ENCODE measurements at regions of chr14 and their contacts with region 1.

Region 1: GRCh38 chr14:72443991-72444441 is 449.9 kb downstream of the DPF3 start:
- DNase-seq: peak; percentile 28
- ATAC-seq: peak; percentile 66
- H3K4me3 ChIP-seq: no peak overlapping the region
- H3K27ac ChIP-seq: peak overlapping the region; percentile 31; the same call in 1 of the 2 replicates
- H3K4me1 ChIP-seq: peaks cover 27% of the 10 kb centered on the region
- H3K27me3 ChIP-seq: no peaks in the 10 kb centered on the region
- CTCF ChIP-seq: no peak
- EP300 ChIP-seq: peak in 1 of 2 experiments; percentile 24; a peak in 1 of 4 replicates
- POLR2A ChIP-seq: no peak
- RAD21 ChIP-seq: no peak

Region 2: DNA sequence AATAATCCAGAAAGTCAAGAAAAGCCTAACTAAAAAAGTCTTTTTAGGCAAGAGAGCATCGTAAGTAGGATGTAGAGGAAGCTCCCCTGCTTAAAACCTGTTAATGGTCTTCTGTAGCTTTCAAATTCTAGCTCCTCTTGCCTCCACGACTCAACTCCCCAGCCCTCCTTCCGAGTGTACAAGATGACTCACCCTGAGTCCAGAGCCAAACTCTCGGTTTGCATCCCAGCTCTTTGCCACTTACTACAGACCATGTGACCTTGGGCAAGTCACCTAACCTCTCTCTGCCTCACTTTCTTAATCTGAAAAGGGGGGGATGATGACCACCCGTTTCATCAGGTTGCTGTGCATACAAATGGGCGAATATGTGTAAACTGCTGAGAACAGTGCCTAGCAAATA is 10.5 kb before region 1 on chr14:
- CTCF ChIA-PET with region 1: no interaction called
- POLR2A ChIA-PET with region 1: no interaction called
- RAD21 ChIA-PET with region 1: interaction called, 4 read pairs
- SMC1A ChIA-PET with region 1: interaction called, 12 read pairs
- in situ Hi-C with region 1: no loop called
- intact Hi-C with region 1: no loop called
- DNase-seq: no peak
- ATAC-seq: no peak
- H3K4me3 ChIP-seq: no peak overlapping the region
- H3K27ac ChIP-seq: no peak overlapping the region
- H3K4me1 ChIP-seq: no peaks in the 10 kb centered on the region
- H3K27me3 ChIP-seq: no peaks in the 10 kb centered on the region
- CTCF ChIP-seq: no peak
- EP300 ChIP-seq: no peak
- POLR2A ChIP-seq: no peak
- RAD21 ChIP-seq: no peak

Region 3: DNA sequence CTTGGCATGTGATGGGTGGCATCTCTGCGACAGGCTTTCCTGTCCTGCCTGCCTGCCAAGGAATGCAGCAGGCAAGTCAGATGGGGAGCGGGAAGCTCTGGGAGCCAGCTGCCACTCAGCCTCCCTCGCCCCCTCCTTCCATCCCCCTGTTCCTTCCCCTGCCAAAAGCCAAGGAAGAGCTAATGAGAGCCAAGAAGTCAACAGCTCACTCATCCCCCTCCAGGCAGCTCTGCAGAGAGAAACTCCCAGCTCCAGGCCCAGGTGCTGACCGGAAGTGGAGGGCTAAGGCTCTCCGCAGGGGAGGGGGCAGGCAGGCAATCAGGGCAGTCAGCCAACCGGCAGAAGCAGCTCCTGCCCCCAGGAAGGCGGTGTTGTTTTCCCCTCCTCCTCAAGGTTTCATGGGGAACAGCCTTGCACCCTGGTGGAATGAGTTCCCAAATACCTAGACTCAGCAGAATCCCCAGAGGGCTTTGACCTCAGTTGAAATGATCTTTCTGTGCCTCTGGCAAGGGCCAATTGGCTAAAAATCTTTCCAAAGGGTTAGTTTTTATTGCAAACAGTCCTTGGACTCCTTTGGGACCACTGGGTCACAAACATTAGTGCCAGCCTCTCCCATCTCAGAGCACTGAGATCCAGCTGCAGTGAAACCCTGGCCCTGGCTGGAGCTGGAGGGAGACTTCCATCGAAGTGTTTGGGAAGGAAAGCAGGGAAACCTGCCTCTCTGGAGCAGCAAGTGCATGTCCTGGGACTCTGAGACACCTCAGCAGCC is 100.8 kb after region 1 on chr14:
- CTCF ChIA-PET with region 1: no interaction called
- POLR2A ChIA-PET with region 1: no interaction called
- RAD21 ChIA-PET with region 1: no interaction called
- SMC1A ChIA-PET with region 1: no interaction called
- in situ Hi-C with region 1: no loop called
- intact Hi-C with region 1: no loop called
- DNase-seq: no peak
- ATAC-seq: no peak
- H3K4me3 ChIP-seq: no peak overlapping the region
- H3K27ac ChIP-seq: no peak overlapping the region
- H3K4me1 ChIP-seq: no peaks in the 10 kb centered on the region
- H3K27me3 ChIP-seq: no peaks in the 10 kb centered on the region
- CTCF ChIP-seq: no peak
- EP300 ChIP-seq: no peak
- POLR2A ChIP-seq: no peak
- RAD21 ChIP-seq: no peak

Measured in GM12878 (cell line).